Right ventricle myocardium inferior (tissue), 1 donor: ENCODE measurements at regions of chr15 and their contacts with region 1.

Region 1: GRCh38 chr15:63246691-63247464 is 30.5 kb upstream of the APH1B start:
- DNase-seq: no peak
- ATAC-seq: peak; percentile 85

Region 2: GRCh38 chr15:63188926-63189871 is 57.7 kb before region 1 on chr15 and contains the start of gene RAB8B:
- intact Hi-C with region 1: loop called (anchors 5 kb)
- DNase-seq: peak; percentile 100
- ATAC-seq: peak; percentile 99
- total RNA-seq, gene RAB8B: 12.3 TPM